Transverse colon (tissue), 4 donors: ENCODE measurements at regions of chr7 and their contacts with region 1.

Region 1: DNA sequence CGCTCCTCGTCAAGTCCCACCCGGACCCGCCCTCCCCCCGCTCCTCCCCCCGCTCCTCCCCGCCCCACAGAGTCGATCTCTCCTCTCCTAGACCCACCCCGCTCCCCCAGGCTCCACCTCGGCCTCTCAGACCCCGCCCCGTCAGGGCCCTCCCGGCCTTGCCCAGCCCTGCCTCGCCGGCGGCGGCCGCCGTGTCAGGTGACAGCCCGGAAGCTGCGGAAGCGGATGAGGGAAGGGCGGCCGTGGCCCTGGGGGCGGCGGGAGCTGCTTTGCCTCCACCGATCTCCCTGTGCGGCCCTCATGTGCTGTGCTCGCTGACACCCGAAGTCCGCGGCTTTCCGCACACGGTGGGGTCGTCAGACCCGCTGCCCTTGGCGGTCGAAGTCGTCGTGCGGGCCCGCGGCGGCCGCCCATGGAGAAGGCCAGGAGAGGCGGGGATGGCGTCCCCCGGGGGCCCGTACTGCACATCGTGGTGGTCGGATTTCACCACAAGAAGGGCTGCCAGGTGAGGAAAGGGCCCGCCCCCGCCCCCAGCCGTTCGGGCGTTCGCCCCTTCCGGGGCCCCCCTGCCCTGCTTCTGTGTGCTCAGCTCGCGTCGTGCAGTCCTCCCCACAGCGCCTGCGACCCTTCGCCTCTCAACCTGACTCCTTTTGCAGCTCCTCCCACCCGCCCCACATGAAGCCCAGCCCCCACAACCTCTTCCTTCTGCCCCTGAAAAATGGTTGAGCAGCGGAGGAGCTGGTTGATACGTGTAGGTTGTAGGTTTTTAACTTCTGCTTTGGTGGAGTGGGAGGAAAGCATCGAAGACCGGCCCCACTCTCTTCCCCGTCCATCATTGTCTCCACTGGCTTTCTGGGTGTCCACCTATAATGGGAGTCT is at the start of gene AVL9:
- DNase-seq: peak; percentile 99
- H3K4me3 ChIP-seq: peak within 1 kb of the TSS; percentile 67 to 99 (median 90)
- H3K27ac ChIP-seq: peak within 1 kb of the TSS; percentile 95 to 99 (median 96)
- H3K4me1 ChIP-seq: peaks cover 0 to 37% (median 11%) of the 10 kb centered on the region in 4 donors
- H3K27me3 ChIP-seq: no peaks in the 10 kb centered on the region
- CTCF ChIP-seq: no peak
- EP300 ChIP-seq: no peak
- POLR2A ChIP-seq: peak; percentile 95
- total RNA-seq, gene AVL9: 50.9 to 69.2 (median 62.9) TPM

Region 2: DNA sequence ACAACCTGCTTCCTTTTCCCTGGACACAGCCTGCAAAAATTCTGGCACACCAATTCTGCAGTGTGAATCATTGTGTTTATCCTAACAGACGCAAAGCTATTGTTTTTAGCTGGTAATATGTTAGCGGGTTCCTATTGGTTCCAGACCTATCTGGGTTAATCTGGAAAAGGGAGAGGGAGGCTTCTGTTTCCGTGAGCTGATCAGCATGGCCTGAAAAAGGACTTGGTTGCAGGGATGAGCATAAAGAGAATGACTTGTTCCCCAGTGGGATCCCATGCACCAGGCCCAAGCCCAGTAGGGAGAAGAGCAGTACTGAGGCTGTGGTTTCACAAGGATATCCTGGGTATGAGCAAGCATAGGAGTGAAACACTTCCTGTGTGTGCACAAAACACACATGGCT is 503.7 kb before region 1 on chr7:
- in situ Hi-C with region 1: no loop called
- intact Hi-C with region 1: no loop called
- DNase-seq: no peak
- H3K4me3 ChIP-seq: no peak overlapping the region
- H3K27ac ChIP-seq: no peak overlapping the region
- H3K4me1 ChIP-seq: peaks cover 0 to 4% (median 0%) of the 10 kb centered on the region in 4 donors
- H3K27me3 ChIP-seq: no peaks in the 10 kb centered on the region
- CTCF ChIP-seq: no peak
- EP300 ChIP-seq: no peak
- POLR2A ChIP-seq: no peak

Region 3: GRCh38 chr7:32154797-32155196 is 340.7 kb before region 1 on chr7:
- in situ Hi-C with region 1: no loop called
- intact Hi-C with region 1: no loop called
- DNase-seq: no peak
- H3K4me3 ChIP-seq: no peak overlapping the region
- H3K27ac ChIP-seq: no peak overlapping the region
- H3K4me1 ChIP-seq: peaks cover 0 to 3% (median 0%) of the 10 kb centered on the region in 4 donors
- H3K27me3 ChIP-seq: no peaks in the 10 kb centered on the region
- CTCF ChIP-seq: no peak
- EP300 ChIP-seq: no peak
- POLR2A ChIP-seq: no peak

Region 4: DNA sequence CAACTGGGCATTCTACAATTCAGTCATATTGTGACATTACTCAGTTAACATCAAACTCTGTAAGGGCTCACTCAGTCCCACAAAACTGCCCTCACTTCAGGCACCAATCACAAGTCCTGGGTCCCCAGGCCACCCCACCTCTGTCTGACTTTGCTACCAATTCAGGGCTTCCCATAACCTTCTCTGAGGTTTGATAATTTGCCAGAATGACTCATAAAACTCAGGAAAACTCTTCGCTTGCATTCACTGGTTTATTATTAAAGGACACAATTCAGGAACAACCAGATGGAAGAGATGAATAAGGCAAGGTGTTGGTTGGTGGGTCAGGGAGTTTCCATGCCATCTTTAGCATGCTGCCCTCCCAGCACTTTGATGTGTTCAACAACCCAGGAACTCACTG is 41.0 kb after region 1 on chr7:
- in situ Hi-C with region 1: no loop called
- intact Hi-C with region 1: no loop called
- DNase-seq: no peak
- H3K4me3 ChIP-seq: no peak overlapping the region
- H3K27ac ChIP-seq: no peak overlapping the region
- H3K4me1 ChIP-seq: peaks cover 0 to 11% (median 5%) of the 10 kb centered on the region in 4 donors
- H3K27me3 ChIP-seq: no peaks in the 10 kb centered on the region
- CTCF ChIP-seq: no peak
- EP300 ChIP-seq: no peak
- POLR2A ChIP-seq: no peak

Region 5: DNA sequence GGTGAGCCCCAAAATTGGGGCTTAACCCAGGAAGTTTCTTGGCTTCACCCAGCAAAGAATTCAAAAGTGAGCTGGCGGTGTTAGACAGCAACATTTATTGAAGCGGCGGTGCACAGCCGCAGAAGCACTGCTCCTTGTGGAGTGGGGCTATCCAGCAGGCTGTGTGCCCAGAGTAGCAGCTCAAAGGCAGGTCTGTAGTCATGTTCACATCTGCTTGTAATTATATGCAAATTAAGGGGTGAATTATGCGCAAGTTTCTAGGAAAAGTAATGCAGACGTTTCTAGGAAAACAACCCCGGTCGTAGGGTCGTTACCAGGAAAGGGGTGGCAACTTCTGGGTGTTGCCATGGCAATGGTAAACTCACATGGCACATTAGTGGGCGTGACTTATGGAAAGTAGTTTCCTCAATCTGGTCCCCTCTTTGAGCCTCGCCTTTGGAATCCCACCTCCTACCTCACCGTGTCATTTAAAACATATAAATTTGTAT is 409.7 kb after region 1 on chr7:
- in situ Hi-C with region 1: loop called in 1 of 4 experiments (anchors 25 kb)
- intact Hi-C with region 1: no loop called
- DNase-seq: peak; percentile 27
- H3K4me3 ChIP-seq: peak overlapping the region in 3 of 4 donors; percentile 3 to 21 (median 11)
- H3K27ac ChIP-seq: peak overlapping the region in 2 of 4 donors; percentile 36 to 58
- H3K4me1 ChIP-seq: peaks cover 3 to 6% (median 3%) of the 10 kb centered on the region in 4 donors
- H3K27me3 ChIP-seq: no peaks in the 10 kb centered on the region
- CTCF ChIP-seq: peak in 2 of 5 experiments; percentile 3 to 15
- EP300 ChIP-seq: no peak
- POLR2A ChIP-seq: no peak

Region 6: DNA sequence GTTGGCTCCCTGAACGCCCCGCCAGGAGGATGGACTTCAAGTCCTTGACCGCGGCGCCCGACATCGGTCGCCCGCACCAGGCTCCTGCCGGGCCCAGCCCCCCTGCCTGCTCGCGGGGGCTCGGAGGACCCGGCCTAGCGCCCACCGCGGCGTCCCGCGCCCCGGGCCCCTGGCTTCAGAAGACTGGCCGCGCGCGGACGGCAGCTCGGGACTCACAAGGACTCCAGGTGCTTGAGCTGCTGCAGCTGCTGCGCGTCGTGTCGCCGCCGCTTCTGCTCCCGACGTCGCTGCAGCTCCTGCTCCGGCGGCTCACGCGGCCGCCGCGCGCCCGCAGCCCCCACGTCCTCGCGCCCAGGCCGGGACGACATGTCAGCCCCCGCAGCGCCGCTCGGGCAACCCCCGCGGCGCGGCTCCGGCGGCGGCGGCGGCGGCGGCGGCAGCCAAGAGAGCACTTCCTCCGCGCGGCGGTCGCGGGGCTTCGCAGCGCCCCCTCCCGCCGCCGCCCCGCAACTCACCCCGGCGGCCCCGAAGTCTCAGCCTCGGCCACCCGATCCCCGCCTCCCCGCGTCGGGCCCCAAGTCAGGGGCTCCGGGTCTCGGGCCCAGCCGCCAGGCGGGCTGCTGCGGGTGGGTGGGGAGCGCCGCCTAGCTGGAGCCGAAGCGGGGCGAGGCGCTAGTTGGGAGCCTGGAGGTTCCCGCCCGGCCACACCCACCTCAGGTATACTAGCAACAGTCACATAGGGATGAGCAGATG is 613.6 kb after region 1 on chr7 and contains the start of gene RP9:
- in situ Hi-C with region 1: loop called in 1 of 4 experiments (anchors 25 kb)
- intact Hi-C with region 1: no loop called
- DNase-seq: peak; percentile 69
- H3K4me3 ChIP-seq: peak within 1 kb of the TSS; percentile 63 to 100 (median 96)
- H3K27ac ChIP-seq: peak within 1 kb of the TSS; percentile 79 to 92 (median 91)
- H3K4me1 ChIP-seq: peaks cover 17 to 47% (median 23%) of the 10 kb centered on the region in 4 donors
- H3K27me3 ChIP-seq: no peaks in the 10 kb centered on the region
- CTCF ChIP-seq: peak; percentile 14 to 65 (median 59)
- EP300 ChIP-seq: no peak
- POLR2A ChIP-seq: no peak
- total RNA-seq, gene RP9: 2.0 to 55.7 (median 14.6) TPM